ENCODE measurements at regions of chr2 and their contacts with region 1.

Region 1: GRCh38 chr2:24075915-24076848 is at the start of gene SF3B6:
- DNase-seq: peak; percentile 100
- H3K4me3 Mint-ChIP-seq: peak within 1 kb of the TSS; percentile 93
- H3K27ac Mint-ChIP-seq: peak within 1 kb of the TSS; percentile 89
- H3K4me1 Mint-ChIP-seq: peaks cover 32% of the 10 kb centered on the region
- H3K27me3 Mint-ChIP-seq: no peaks in the 10 kb centered on the region
- total RNA-seq, gene SF3B6: 145 to 148 TPM

Region 2: DNA sequence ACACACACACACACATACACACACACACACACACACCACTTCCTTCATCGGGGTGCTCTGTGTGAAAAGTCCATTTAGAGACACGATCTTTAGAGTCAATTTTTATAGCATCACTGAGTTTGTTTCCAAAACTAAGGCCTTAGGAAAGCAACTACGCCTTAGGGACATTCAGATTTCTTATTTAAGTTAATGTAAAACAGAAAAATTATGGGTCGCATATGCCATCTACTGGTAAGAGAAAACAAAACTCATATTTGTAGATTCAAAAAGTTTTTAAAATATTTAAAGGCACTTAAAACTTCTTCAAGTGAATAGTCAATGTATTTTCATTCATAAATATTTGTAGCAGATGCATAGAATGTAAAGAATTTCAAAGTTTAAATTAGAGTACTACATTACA is 315.4 kb before region 1 on chr2:
- CTCF ChIA-PET with region 1: no interaction called
- POLR2A ChIA-PET with region 1: no interaction called
- intact Hi-C with region 1: no loop called
- DNase-seq: no peak
- H3K4me3 Mint-ChIP-seq: no peak overlapping the region
- H3K27ac Mint-ChIP-seq: no peak overlapping the region
- H3K4me1 Mint-ChIP-seq: peaks cover 9% of the 10 kb centered on the region
- H3K27me3 Mint-ChIP-seq: no peaks in the 10 kb centered on the region

Region 3: GRCh38 chr2:23939987-23940717 is 136.0 kb before region 1 on chr2 and contains the start of gene UBXN2A:
- CTCF ChIA-PET with region 1: interaction called, 3 read pairs
- POLR2A ChIA-PET with region 1: interaction called, 4 read pairs
- intact Hi-C with region 1: loop called (anchors 2 kb)
- DNase-seq: peak; percentile 79
- H3K4me3 Mint-ChIP-seq: peak within 1 kb of the TSS; percentile 86
- H3K27ac Mint-ChIP-seq: peak within 1 kb of the TSS; percentile 82
- H3K4me1 Mint-ChIP-seq: peaks cover 20% of the 10 kb centered on the region
- H3K27me3 Mint-ChIP-seq: peaks cover 5% of the 10 kb centered on the region
- total RNA-seq, gene UBXN2A: 11.8 to 12.2 TPM

Region 4: DNA sequence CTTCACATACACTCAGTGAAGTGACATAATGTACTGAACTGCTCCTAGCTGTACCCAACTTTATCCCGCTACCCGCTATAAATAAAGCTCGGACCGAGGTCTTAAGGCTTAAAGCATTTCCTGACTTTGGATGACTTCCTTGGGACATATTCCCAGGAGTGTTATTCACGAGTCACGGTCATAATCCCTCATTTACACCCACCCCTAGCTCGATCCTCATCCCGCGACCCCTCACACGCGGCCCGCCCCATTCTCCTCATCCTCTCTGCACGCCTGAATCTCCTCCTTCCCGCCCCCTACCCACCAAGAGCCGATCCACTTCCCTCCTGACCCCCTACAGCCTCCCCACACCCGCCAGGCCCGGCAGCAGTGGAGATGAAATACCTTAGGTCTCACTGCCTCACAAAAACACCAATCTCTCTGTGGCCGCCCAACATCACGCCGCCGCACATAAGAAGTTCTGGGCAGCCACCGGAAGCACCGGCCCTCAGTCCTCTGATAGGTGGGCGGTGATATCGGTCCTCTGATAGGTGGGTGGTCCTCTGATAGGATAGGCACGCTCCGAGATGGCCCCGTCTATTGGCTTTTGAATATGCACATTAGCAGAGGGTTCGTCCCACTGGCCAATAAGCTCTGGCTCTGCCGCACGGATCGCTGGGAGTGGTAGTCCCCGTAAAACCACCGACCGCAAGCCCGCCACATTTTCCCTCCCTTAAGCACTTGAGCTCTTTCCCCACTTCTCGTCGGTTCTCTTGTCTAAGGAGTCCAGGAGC is 29.1 kb before region 1 on chr2 and contains the start of gene WDCP:
- CTCF ChIA-PET with region 1: interaction called, 3 read pairs
- POLR2A ChIA-PET with region 1: interaction called, 13 read pairs
- intact Hi-C with region 1: loop called (anchors 1 kb)
- DNase-seq: peak; percentile 97
- H3K4me3 Mint-ChIP-seq: peak within 1 kb of the TSS; percentile 95
- H3K27ac Mint-ChIP-seq: peak within 1 kb of the TSS; percentile 74
- H3K4me1 Mint-ChIP-seq: peaks cover 21% of the 10 kb centered on the region
- H3K27me3 Mint-ChIP-seq: peaks cover 3% of the 10 kb centered on the region
- total RNA-seq, gene WDCP: 18.4 to 21.2 TPM

Region 5: GRCh38 chr2:24123195-24123921 is 47.2 kb after region 1 on chr2 and contains the starts of genes FAM228B and PFN4:
- CTCF ChIA-PET with region 1: interaction called, 3 read pairs
- POLR2A ChIA-PET with region 1: no interaction called
- intact Hi-C with region 1: loop called (anchors 2 kb)
- DNase-seq: peak; percentile 82
- H3K4me3 Mint-ChIP-seq: peak within 1 kb of the TSS; percentile 72
- H3K27ac Mint-ChIP-seq: no peak within 1 kb of the TSS
- H3K4me1 Mint-ChIP-seq: peaks cover 10% of the 10 kb centered on the region
- H3K27me3 Mint-ChIP-seq: no peaks in the 10 kb centered on the region
- total RNA-seq, gene FAM228B: 6.5 to 7.2 TPM
- total RNA-seq, gene PFN4: 0.40 TPM in 1 of 2 experiments, not detected in the other

Region 6: GRCh38 chr2:24181849-24182248 is 105.7 kb after region 1 on chr2:
- CTCF ChIA-PET with region 1: no interaction called
- POLR2A ChIA-PET with region 1: no interaction called
- intact Hi-C with region 1: no loop called
- DNase-seq: no peak
- H3K4me3 Mint-ChIP-seq: no peak overlapping the region
- H3K27ac Mint-ChIP-seq: no peak overlapping the region
- H3K4me1 Mint-ChIP-seq: no peaks in the 10 kb centered on the region
- H3K27me3 Mint-ChIP-seq: no peaks in the 10 kb centered on the region

Region 7: DNA sequence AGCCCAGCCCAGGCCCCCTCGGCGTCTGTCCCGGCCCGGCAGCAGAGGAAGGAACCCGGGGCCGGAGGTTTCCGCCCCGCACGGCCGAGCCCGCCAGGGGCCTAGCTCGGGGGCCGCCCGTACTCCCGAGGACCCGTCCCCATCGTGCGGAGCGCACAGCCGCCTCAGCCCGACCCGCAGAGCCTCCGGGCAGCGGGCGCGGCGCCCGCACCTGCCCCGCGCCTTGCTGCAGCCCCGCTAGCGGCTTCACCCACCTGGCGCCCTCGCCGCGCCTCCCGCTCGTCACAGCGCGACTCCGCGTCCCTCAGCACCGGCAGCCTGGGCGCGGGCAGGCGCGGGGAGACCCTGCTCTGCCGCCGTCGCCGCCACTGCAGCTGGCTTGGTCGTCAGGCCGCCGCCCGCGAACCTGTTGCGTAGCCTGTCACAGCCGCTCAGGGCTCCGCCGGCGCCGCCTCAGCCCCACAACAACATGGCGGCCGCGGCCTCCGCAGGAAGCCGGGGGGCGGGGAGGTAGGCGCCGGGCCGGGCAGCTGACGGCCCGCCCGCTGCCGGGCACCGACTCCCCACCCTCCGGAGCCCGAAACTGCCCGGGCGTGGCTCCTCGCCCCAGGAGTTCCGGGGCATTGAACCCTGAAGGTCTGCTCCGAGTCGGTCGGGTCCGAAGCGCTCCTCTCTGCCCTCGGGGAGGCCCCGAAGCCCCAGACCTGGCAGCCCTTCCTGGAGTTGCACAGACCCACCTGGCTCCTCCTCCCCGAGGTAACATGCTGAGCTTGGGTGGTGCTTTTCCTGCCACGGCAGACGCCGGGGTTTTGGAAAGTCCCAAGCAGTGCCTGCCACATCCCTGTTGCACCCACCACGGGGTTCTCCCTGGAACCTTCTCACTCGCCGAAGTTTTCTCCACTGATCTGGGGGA is 284.1 kb after region 1 on chr2 and contains the start of gene ITSN2:
- CTCF ChIA-PET with region 1: no interaction called
- POLR2A ChIA-PET with region 1: interaction called, 4 read pairs
- intact Hi-C with region 1: loop called (anchors 2 kb)
- DNase-seq: peak; percentile 86
- H3K4me3 Mint-ChIP-seq: peak within 1 kb of the TSS; percentile 85
- H3K27ac Mint-ChIP-seq: peak within 1 kb of the TSS; percentile 92
- H3K4me1 Mint-ChIP-seq: peaks cover 28% of the 10 kb centered on the region
- H3K27me3 Mint-ChIP-seq: no peaks in the 10 kb centered on the region
- total RNA-seq, gene ITSN2: 60.4 to 61.0 TPM

Region 8: GRCh38 chr2:24792874-24793760 is 716.9 kb after region 1 on chr2 and contains the starts of genes CENPO and PTRHD1:
- CTCF ChIA-PET with region 1: no interaction called
- POLR2A ChIA-PET with region 1: no interaction called
- intact Hi-C with region 1: loop called (anchors 1 kb)
- DNase-seq: peak; percentile 97
- H3K4me3 Mint-ChIP-seq: peak within 1 kb of the TSS; percentile 98
- H3K27ac Mint-ChIP-seq: peak within 1 kb of the TSS; percentile 100
- H3K4me1 Mint-ChIP-seq: peaks cover 35% of the 10 kb centered on the region
- H3K27me3 Mint-ChIP-seq: no peaks in the 10 kb centered on the region
- total RNA-seq, gene CENPO: 39.9 to 42.4 TPM
- total RNA-seq, gene PTRHD1: 19.2 to 20.3 TPM

Measured in activated CD4-positive, alpha-beta memory T cell treated with anti-CD3 and anti-CD28 coated beads for 36 hours (primary cell).